Panc1 (cell line): ENCODE measurements at regions of chr7 and their contacts with region 1.

Region 1: DNA sequence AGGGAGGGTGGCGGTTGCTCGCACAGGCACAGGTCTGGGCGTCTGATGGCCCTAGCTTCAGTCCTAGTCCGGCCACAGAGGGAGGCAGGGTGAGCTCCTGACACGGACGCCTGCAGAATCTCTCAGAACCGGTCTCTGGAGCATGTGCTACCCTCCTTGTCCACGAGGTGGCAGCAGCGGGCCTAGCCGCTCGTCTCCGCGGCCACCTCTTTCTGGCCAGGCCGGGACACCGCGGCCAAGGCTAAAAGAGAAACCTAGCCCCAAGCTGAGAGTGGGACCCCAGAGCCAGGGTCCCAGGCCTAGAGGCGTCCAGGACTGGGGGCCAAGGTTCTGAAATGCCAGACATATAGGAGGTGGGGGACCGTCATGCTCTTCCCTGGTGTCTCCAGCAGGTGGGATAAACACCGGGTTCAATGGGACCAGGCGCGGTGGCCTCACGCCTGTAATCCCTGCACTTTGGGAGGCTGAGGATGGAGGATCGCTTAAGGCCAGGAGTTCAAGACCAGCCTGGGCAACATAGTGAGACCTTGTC is 3.2 kb upstream of the LAT2 start:
- DNase-seq: peak; percentile 65
- ATAC-seq: peak; percentile 81
- H3K4me3 ChIP-seq: peak overlapping the region in 1 of 2 experiments; percentile 34; a peak in 2 of 4 replicates
- H3K27ac ChIP-seq: no peak overlapping the region
- H3K4me1 ChIP-seq: peaks cover 12% of the 10 kb centered on the region; the same call in 1 of the 2 replicates
- H3K27me3 ChIP-seq: no peaks in the 10 kb centered on the region
- CTCF ChIP-seq: peak; percentile 98

Region 2: DNA sequence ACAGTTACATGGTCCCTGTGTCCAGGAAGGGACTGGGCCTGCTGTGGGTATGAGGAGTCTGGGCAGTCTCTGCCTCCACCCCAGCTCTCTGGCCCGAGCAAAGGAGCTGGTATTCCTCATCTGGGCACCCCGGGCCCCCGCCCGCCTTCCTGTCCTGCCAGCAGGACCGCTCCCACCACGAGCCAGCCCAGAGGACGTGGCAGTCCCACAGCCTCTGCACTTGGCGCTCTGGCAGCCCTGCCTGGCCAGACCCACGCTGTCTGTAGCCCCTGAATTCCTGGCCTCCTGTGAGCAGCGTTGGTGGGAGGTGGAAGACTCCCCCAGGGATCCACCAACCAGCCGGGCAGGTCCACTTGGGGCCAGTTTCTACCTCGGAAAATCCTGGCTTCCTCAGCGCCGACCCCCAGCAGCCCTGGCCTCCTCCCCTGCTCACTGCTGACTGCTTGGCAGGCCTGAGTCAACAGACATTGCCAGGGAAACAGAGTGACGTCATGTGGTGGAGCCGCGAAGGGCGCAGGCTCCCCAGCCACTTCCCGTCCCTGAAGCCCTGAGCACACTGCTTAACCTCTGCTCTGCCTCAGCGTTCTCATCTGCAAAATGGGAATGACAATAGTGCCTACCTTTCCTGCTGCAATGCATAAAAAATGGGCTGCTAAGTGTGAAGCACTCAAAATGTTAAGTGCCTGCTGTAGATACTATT is 144.7 kb before region 1 on chr7:
- CTCF ChIA-PET with region 1: interaction called, 20 read pairs
- POLR2A ChIA-PET with region 1: no interaction called
- in situ Hi-C with region 1: no loop called
- intact Hi-C with region 1: loop called (anchors 10 kb)
- DNase-seq: peak; percentile 64
- ATAC-seq: peak; percentile 88
- H3K4me3 ChIP-seq: peak overlapping the region in 1 of 2 experiments; percentile 23; a peak in 1 of 4 replicates
- H3K27ac ChIP-seq: peak overlapping the region; percentile 37; the same call in 1 of the 2 replicates
- H3K4me1 ChIP-seq: peaks cover 10% of the 10 kb centered on the region; the same call in 1 of the 2 replicates
- H3K27me3 ChIP-seq: no peaks in the 10 kb centered on the region
- CTCF ChIP-seq: no peak

Region 3: GRCh38 chr7:74254129-74254857 is 47.6 kb after region 1 on chr7 and contains the start of gene RFC2:
- CTCF ChIA-PET with region 1: no interaction called
- POLR2A ChIA-PET with region 1: no interaction called
- in situ Hi-C with region 1: no loop called
- intact Hi-C with region 1: no loop called
- DNase-seq: peak; percentile 71
- ATAC-seq: peak; percentile 99
- H3K4me3 ChIP-seq: peak within 1 kb of the TSS; percentile 74 to 88
- H3K27ac ChIP-seq: peak within 1 kb of the TSS; percentile 85
- H3K4me1 ChIP-seq: peaks cover 15% of the 10 kb centered on the region
- H3K27me3 ChIP-seq: no peaks in the 10 kb centered on the region
- CTCF ChIP-seq: no peak
- total RNA-seq, gene RFC2: 56.2 TPM

Region 4: DNA sequence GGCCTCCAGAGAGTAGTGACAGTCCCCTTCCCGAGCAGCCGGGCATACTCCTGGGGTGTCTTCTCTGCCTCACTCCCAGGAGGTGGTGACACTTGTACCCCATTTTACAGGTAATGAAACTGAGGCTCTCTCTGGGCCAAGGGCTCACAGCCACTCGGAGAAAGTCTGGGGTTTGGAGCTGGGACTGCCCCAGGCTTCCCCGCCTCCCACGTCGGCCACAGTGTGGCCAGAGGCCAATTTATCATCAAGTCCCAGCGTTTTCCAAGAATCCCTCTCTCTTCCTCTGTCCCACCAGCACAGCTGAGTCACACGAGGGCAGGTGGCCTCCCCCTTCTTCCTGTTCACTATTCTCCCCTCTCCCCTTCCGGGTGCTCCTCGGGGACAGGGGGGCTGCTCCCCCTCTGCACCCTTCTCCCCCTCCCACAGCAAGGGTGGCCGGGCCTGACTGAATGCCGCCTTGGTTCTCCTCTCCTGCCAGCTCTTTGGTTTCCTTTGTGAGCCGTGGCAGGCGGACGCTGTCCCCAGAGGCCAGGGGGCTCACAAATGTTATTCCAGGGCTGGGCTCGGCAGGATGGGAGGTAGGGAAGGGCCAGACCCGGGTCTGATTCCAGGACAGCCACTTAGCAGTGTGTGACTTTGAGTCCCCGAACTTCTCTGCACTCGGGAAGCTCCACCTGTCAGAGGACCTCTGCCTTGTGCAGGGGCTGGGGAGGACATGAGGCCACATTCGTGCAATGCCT is 100.2 kb after region 1 on chr7:
- CTCF ChIA-PET with region 1: no interaction called
- POLR2A ChIA-PET with region 1: interaction called, 18 read pairs
- in situ Hi-C with region 1: no loop called
- intact Hi-C with region 1: no loop called
- DNase-seq: no peak
- ATAC-seq: peak; percentile 66
- H3K4me3 ChIP-seq: peak overlapping the region in 1 of 2 experiments; percentile 17; a peak in 2 of 4 replicates
- H3K27ac ChIP-seq: peak overlapping the region; percentile 66
- H3K4me1 ChIP-seq: peaks cover 24% of the 10 kb centered on the region
- H3K27me3 ChIP-seq: no peaks in the 10 kb centered on the region
- CTCF ChIP-seq: no peak

Region 5: GRCh38 chr7:74401137-74401859 is 194.6 kb after region 1 on chr7:
- CTCF ChIA-PET with region 1: interaction called, 52 read pairs
- POLR2A ChIA-PET with region 1: interaction called, 5 read pairs
- in situ Hi-C with region 1: no loop called
- intact Hi-C with region 1: loop called (anchors 2 kb)
- DNase-seq: peak; percentile 75
- ATAC-seq: peak; percentile 84
- H3K4me3 ChIP-seq: no peak overlapping the region
- H3K27ac ChIP-seq: no peak overlapping the region
- H3K4me1 ChIP-seq: no peaks in the 10 kb centered on the region
- H3K27me3 ChIP-seq: no peaks in the 10 kb centered on the region
- CTCF ChIP-seq: peak; percentile 97

Region 6: GRCh38 chr7:74690474-74690873 is 483.8 kb after region 1 on chr7:
- CTCF ChIA-PET with region 1: no interaction called
- POLR2A ChIA-PET with region 1: no interaction called
- in situ Hi-C with region 1: no loop called
- intact Hi-C with region 1: no loop called
- DNase-seq: no peak
- ATAC-seq: no peak
- H3K4me3 ChIP-seq: no peak overlapping the region
- H3K27ac ChIP-seq: no peak overlapping the region
- H3K4me1 ChIP-seq: peaks cover 6% of the 10 kb centered on the region; the same call in 1 of the 2 replicates
- H3K27me3 ChIP-seq: no peaks in the 10 kb centered on the region
- CTCF ChIP-seq: no peak